ENCODE measurements at regions of chr1 and their contacts with region 1.

Region 1: GRCh38 chr1:43227143-43227764 is 42.5 kb upstream of the TMEM125 start:
- DNase-seq: peak; percentile 80
- H3K4me3 Mint-ChIP-seq: no peak overlapping the region
- H3K27ac Mint-ChIP-seq: no peak overlapping the region
- H3K4me1 Mint-ChIP-seq: peaks cover 11% of the 10 kb centered on the region
- H3K27me3 Mint-ChIP-seq: no peaks in the 10 kb centered on the region
- CTCF ChIP-seq: peak; percentile 71

Region 2: GRCh38 chr1:43206600-43207228 is 20.5 kb before region 1 on chr1:
- CTCF ChIA-PET with region 1: interaction called, 8 read pairs
- POLR2A ChIA-PET with region 1: interaction called, 10 read pairs
- intact Hi-C with region 1: no loop called
- DNase-seq: peak; percentile 75
- H3K4me3 Mint-ChIP-seq: peak overlapping the region; percentile 68
- H3K27ac Mint-ChIP-seq: peak overlapping the region; percentile 89
- H3K4me1 Mint-ChIP-seq: peaks cover 18% of the 10 kb centered on the region
- H3K27me3 Mint-ChIP-seq: no peaks in the 10 kb centered on the region
- CTCF ChIP-seq: no peak

Region 3: DNA sequence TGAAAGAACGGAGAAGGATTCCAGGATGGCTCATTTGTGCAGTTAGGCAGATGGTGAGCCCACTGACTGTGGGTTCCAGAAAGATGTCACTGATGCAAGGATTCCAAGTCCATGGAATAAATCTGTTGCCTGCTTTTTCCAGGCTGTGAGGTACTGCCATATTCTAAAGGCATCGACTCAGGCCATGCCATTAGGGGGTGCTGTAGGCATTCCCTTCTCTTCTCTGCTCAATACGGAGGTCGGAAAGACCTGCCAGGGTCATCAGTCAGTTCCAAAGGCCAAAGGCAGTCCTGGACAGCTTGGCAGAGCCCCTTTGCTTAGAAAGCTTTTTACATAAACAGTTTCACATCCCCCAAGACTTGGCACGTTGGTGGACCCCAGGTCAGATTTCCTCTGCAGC is 10.8 kb after region 1 on chr1:
- CTCF ChIA-PET with region 1: interaction called, 10 read pairs
- POLR2A ChIA-PET with region 1: no interaction called
- intact Hi-C with region 1: no loop called
- DNase-seq: peak; percentile 78
- H3K4me3 Mint-ChIP-seq: no peak overlapping the region
- H3K27ac Mint-ChIP-seq: peak overlapping the region; percentile 3
- H3K4me1 Mint-ChIP-seq: peaks cover 21% of the 10 kb centered on the region
- H3K27me3 Mint-ChIP-seq: no peaks in the 10 kb centered on the region
- CTCF ChIP-seq: peak; percentile 53

Region 4: DNA sequence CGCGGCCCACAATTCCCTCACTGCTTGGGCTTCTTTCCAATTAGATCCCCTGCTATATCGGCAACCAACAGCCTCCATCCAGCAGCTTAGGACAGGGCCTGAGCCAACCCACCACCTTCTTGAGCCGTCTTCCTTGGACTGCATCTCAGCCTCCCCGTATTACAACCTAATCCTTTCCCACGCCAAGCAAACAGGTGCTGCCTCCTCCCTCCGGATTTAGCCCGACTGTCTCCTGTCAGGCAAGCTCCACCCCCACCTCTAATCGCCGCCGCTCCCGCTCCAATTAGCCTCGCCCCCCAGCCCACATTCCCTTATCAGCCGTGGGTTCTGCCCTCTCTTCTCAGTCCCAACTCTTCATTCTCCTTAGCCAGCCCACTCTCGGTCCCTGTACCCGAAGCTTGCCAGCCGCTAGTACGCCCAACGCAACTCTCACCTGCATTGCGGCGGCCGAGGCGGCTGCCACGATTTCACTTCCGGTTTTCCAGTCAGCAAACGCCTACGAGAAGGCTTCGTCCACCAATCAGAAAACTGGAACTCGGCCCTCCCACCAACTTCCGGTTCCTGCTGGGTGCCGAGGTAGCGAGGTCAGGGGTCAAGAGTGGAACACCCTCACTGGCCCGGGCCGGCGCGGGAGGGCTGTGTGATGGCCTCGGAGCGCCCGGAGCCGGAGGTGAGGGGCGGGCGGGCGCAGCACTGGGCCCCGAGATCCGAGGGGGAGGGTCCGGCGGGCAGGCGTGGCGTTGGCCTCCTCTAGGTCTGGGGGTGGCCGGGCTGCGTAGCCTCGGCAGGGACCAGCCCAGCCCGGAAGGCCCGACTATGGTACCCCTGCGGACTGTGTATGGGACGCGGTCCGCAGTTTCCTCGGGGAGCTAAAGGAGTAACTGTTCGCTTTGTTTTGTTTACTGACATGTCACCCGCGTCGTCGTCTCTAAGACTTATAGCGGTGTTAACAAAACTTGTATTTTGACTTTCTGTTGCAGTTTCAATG is 162.4 kb after region 1 on chr1 and contains the starts of genes MED8 and SZT2:
- CTCF ChIA-PET with region 1: interaction called, 5 read pairs
- POLR2A ChIA-PET with region 1: interaction called, 18 read pairs
- intact Hi-C with region 1: loop called (anchors 10 kb)
- DNase-seq: peak; percentile 96
- H3K4me3 Mint-ChIP-seq: peak within 1 kb of the TSS; percentile 91
- H3K27ac Mint-ChIP-seq: peak within 1 kb of the TSS; percentile 95
- H3K4me1 Mint-ChIP-seq: peaks cover 31% of the 10 kb centered on the region
- H3K27me3 Mint-ChIP-seq: no peaks in the 10 kb centered on the region
- CTCF ChIP-seq: no peak
- total RNA-seq, gene MED8: 52.0 and 61.6 TPM in 2 replicates
- total RNA-seq, gene SZT2: 65.3 and 67.4 TPM in 2 replicates

Region 5: DNA sequence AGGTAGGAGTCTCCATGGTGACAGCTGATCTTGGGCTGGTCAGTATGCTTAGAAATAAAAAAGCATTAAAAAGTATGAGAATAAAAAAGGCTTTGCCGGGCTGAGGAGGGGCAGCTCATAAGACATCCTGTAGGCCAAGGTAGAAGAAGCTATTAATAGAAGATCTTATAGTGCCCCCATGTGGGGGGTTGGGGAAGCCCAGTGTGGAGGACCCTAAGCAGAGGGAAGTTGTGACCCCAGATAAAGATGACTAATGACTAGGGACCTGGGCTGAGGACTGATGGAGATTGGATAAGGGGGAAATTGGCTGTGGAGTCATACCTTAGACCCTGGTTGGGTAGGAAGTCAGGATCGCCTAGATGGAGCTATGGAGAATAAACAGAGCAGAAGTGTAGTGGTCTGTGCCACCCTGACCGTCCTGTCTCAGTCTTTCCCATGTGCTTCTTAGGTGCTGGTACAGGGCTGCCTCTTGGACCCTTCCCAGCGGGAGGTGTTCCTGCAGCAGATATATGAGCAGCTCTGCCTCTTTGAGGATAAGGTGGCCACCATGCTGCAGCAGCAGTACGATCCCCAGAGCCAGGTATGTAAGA is 187.5 kb after region 1 on chr1:
- CTCF ChIA-PET with region 1: interaction called, 15 read pairs
- POLR2A ChIA-PET with region 1: interaction called, 6 read pairs
- intact Hi-C with region 1: loop called (anchors 1 kb)
- DNase-seq: peak; percentile 52
- H3K4me3 Mint-ChIP-seq: no peak overlapping the region
- H3K27ac Mint-ChIP-seq: peak overlapping the region; percentile 21
- H3K4me1 Mint-ChIP-seq: no peaks in the 10 kb centered on the region
- H3K27me3 Mint-ChIP-seq: no peaks in the 10 kb centered on the region
- CTCF ChIP-seq: peak; percentile 37

Region 6: GRCh38 chr1:43522776-43523480 is 295.7 kb after region 1 on chr1:
- CTCF ChIA-PET with region 1: interaction called, 5 read pairs
- POLR2A ChIA-PET with region 1: no interaction called
- intact Hi-C with region 1: loop called (anchors 2 kb)
- DNase-seq: peak; percentile 94
- H3K4me3 Mint-ChIP-seq: no peak overlapping the region
- H3K27ac Mint-ChIP-seq: peak overlapping the region; percentile 24
- H3K4me1 Mint-ChIP-seq: peaks cover 29% of the 10 kb centered on the region
- H3K27me3 Mint-ChIP-seq: no peaks in the 10 kb centered on the region
- CTCF ChIP-seq: no peak

Region 7: DNA sequence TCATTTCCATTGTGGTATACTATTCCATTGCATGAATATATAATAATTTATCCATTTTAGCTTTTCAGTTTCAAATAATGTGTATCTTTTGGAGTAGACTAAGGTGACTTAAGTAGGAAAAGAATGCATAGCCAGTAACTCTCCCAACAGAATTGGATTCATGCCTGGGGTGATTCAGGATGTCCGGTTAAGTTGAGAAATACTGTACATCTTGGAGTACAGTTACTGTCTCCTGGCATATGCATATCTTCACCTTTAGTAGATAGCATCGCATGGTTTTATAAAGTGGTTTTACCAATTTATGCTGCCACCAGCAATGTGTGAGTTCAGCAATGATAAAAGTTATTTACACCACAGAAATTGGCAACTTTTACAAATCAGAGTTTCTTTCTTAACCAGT is 822.6 kb after region 1 on chr1:
- CTCF ChIA-PET with region 1: no interaction called
- POLR2A ChIA-PET with region 1: no interaction called
- intact Hi-C with region 1: loop called (anchors 5 kb)
- DNase-seq: peak; percentile 92
- H3K4me3 Mint-ChIP-seq: no peak overlapping the region
- H3K27ac Mint-ChIP-seq: no peak overlapping the region
- H3K4me1 Mint-ChIP-seq: peaks cover 33% of the 10 kb centered on the region
- H3K27me3 Mint-ChIP-seq: no peaks in the 10 kb centered on the region
- CTCF ChIP-seq: no peak

Measured in MCF 10A (cell line).